ENCODE measurements at regions of chr9 and their contacts with region 1.

Region 1: DNA sequence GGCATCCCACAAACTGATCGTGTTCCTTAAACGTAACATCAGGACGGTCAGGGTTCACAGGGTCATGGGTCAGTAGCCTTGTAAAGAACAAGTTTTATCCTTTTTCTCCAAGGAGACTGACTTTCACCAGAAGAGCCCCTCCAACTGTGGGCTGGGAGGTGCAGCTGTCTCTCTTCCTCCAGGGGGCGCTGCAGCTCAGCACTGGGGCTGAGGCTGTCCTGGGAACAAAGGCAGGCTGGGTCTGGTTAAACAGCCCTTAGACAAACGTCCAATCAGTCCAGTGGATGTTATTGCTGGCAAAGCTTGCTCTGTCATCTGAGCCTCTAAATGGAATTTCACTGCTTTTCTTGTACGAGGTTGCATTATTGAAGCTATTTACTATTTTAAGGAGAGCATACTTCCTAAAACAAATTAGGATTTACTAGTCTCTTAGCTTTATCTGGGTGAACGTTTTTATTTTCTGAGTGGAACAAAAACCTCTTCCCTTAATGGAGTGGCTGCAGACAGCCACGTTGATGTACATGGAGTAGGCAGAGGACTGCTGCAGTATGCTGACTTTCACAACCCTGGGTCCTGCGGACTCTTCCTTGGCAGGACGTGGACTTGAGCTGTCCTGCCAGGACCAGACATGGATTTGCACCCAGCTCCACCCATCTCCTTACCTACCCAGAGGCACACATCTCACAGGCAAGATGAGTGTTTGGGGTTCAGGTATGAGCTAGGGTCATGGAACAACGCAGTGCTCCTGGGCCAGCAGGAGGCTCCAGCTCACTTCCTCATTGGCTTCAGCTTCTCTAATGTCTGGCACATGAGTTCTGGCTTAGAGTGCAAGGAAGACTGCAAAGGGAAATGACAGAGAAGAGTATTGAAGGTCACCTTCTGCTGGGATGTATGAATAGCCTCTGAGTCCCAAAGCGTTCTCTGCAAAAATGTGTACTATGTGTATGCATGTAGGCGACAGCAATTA is 7.8 kb downstream of the EXOSC2 start:
- DNase-seq: peak; percentile 56
- CTCF ChIP-seq: peak; percentile 81

Region 2: GRCh38 chr9:130654879-130655278 is 46.5 kb before region 1 on chr9:
- CTCF ChIA-PET with region 1: no interaction called
- POLR2A ChIA-PET with region 1: no interaction called
- DNase-seq: no peak
- CTCF ChIP-seq: no peak

Region 3: GRCh38 chr9:130682490-130683121 is 18.7 kb before region 1 on chr9:
- CTCF ChIA-PET with region 1: interaction called, 53 read pairs
- POLR2A ChIA-PET with region 1: no interaction called
- DNase-seq: peak; percentile 71
- CTCF ChIP-seq: peak; percentile 85

Region 4: GRCh38 chr9:130732131-130732530 is 30.8 kb after region 1 on chr9:
- CTCF ChIA-PET with region 1: interaction called, 10 read pairs
- POLR2A ChIA-PET with region 1: no interaction called
- DNase-seq: no peak
- CTCF ChIP-seq: no peak

Region 5: DNA sequence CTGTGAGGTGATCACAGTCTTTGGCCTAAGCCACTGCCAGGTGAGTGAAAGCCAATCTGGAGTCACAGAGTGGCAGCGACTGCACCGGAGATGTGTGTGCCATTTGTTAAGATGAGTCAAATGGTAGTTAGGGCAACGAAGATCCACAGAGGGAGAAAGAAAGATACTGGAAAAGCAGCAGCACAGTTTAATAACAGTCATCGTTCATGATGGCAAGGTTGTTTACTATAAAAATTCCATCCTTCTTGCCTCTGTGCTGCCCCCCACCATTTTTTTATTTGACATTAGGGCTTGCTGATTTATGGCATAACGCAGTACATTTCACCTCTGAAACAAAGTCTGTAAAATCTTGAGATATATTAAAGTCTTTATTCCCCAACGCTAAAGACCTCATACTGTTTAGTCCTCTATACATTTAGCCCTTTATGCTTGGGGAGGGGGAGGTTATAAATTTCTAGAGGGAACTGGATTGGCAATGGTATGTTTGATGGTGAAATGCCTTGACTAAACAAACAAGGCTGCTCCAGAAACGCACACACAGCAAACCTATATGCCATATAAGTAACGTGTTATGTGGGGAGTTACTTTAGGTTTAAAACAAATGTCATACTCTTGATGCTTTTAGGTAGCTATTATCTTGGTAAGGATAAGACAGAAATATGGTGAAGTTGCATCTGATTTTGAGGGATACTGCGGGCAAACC is 78.0 kb after region 1 on chr9:
- CTCF ChIA-PET with region 1: no interaction called
- POLR2A ChIA-PET with region 1: no interaction called
- DNase-seq: no peak
- CTCF ChIP-seq: no peak

Region 6: GRCh38 chr9:130854092-130854491 is 152.8 kb after region 1 on chr9:
- CTCF ChIA-PET with region 1: interaction called, 18 read pairs
- POLR2A ChIA-PET with region 1: no interaction called
- DNase-seq: no peak
- CTCF ChIP-seq: no peak

Region 7: DNA sequence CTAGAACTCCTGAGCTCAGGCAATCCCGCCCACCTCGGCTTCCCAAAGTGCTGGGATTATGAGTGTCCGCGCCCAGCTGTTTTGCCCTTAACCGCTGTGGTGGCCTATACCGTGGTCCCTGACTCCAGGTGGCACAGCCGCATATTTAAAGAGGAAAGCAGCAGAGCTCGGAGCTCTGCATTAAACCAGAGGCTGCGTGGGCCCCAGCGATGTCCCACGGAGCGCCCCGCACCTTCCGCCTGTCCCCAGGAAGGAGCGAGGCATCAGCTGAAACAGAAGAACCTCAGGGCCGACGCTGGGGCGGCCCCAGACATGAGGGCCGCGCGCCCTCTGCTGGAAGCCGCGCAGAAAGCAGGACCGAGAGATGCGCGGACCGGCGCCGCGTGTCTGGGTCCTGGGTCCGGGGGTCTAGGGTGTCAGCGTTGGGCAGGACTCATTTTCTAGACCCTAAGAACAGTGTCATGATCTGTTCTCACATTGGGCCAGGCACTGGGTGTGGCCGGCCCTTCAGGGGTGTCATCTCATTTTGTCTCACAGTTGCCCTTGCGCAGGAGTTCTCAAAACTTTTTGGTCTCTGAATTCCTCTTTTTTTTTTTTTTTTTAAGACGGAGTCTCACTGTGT is 345.4 kb after region 1 on chr9:
- CTCF ChIA-PET with region 1: interaction called, 15 read pairs
- POLR2A ChIA-PET with region 1: no interaction called
- DNase-seq: peak; percentile 88
- CTCF ChIP-seq: peak; percentile 96